IMR-90 (cell line): ENCODE measurements at regions of chr20 and their contacts with region 1.

Region 1: DNA sequence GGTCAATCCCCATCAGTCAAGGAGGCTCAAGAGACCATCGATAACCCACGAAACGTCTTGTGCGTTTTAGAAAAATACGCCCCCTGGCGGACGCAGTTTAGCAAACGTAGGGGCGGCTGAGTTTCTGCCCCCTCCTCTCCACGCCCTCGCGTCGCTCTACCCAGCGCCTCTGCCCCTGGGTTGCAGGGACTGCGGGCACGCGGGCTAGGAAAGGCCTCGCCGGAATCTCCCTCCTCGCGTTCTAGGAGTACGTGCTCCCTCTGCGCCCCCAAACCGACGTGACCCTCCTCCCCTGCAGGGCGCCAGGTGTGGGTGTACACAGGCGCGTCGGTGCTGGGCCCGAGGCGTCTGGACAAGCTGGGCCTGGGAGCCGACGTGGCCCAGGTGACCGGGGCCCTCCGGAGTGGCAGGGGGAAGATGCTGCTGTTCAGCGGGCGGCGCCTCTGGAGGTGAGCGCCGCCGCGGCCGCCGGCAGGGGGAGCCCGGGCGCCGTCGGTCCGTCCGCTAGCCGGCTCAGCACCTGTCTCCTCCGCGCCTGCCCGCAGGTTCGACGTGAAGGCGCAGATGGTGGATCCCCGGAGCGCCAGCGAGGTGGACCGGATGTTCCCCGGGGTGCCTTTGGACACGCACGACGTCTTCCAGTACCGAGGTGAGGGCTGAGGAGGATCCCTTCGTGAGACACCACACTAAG is 5.3 kb downstream of the MMP9 start:
- DNase-seq: peak; percentile 32
- ATAC-seq: peak; percentile 89
- H3K4me3 ChIP-seq: no peak overlapping the region
- H3K27ac ChIP-seq: no peak overlapping the region
- H3K4me1 ChIP-seq: no peaks in the 10 kb centered on the region
- H3K27me3 ChIP-seq: peaks cover 69% of the 10 kb centered on the region
- CTCF ChIP-seq: peak; percentile 67
- POLR2A ChIP-seq: no peak
- RAD21 ChIP-seq: peak; percentile 60

Region 2: DNA sequence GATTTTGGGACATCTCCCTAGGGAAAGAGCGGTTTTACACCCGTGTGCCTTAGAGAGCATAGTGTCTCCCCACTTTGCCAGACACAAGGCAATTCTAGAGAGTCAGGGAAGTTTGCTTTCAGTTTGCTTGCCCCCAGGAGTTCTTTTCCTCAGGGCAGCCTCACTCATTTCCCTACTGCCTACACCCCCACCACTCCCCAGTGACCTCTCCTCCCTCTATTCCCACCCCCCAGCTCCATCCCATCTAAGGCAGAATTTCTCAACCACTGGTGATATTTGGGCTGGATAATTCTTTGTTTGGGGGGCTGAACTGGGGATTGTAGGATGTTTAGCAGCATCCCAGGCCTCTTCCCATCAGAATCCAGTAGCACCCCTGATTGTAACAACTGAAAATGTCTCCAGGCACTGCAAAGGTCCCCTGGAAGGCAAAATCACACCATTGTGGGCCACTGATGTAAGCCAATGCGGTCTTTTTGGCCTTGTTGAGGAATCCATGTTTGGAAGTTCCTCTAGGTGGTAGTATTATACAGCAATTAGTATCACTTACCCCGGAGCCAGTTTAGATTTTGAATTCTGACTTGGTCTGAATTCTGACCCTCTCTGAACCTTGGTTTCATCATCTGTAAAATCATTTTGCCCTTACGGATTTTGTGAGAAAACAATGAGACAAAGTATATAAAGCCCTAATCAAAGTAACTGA is 468.1 kb before region 1 on chr20:
- CTCF ChIA-PET with region 1: no interaction called
- POLR2A ChIA-PET with region 1: no interaction called
- dilution Hi-C with region 1: no loop called
- in situ Hi-C with region 1: no loop called
- intact Hi-C with region 1: loop called (anchors 10 kb)
- DNase-seq: peak; percentile 37
- ATAC-seq: peak; percentile 69
- H3K4me3 ChIP-seq: no peak overlapping the region
- H3K27ac ChIP-seq: no peak overlapping the region
- H3K4me1 ChIP-seq: no peaks in the 10 kb centered on the region
- H3K27me3 ChIP-seq: peaks cover 5% of the 10 kb centered on the region
- CTCF ChIP-seq: peak; percentile 56
- POLR2A ChIP-seq: no peak
- RAD21 ChIP-seq: peak; percentile 65

Region 3: DNA sequence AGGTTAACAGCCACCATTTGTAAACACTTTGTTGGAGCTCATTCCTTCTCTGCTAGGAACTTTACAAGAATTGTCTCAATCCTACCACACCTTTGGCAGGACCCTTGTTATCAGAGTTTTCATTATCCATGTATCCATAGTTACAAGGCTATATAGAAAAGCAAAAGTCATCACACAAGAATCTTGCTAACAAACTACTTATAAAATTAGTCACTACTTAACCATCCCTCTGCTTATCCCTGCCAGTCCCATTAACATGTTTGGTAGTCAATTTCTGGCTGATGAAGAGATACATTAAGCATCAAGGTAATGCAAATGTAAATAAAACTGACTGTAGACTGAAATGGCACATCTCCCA is 146.2 kb before region 1 on chr20:
- CTCF ChIA-PET with region 1: no interaction called
- POLR2A ChIA-PET with region 1: no interaction called
- dilution Hi-C with region 1: no loop called
- in situ Hi-C with region 1: no loop called
- intact Hi-C with region 1: no loop called
- DNase-seq: peak; percentile 81
- ATAC-seq: peak; percentile 87
- H3K4me3 ChIP-seq: no peak overlapping the region
- H3K27ac ChIP-seq: peak overlapping the region; percentile 83; the same call in 1 of the 2 replicates
- H3K4me1 ChIP-seq: peaks cover 5% of the 10 kb centered on the region; the same call in 1 of the 2 replicates
- H3K27me3 ChIP-seq: no peaks in the 10 kb centered on the region
- CTCF ChIP-seq: no peak
- POLR2A ChIP-seq: no peak; the same call in 1 of the 2 replicates
- RAD21 ChIP-seq: no peak

Region 4: DNA sequence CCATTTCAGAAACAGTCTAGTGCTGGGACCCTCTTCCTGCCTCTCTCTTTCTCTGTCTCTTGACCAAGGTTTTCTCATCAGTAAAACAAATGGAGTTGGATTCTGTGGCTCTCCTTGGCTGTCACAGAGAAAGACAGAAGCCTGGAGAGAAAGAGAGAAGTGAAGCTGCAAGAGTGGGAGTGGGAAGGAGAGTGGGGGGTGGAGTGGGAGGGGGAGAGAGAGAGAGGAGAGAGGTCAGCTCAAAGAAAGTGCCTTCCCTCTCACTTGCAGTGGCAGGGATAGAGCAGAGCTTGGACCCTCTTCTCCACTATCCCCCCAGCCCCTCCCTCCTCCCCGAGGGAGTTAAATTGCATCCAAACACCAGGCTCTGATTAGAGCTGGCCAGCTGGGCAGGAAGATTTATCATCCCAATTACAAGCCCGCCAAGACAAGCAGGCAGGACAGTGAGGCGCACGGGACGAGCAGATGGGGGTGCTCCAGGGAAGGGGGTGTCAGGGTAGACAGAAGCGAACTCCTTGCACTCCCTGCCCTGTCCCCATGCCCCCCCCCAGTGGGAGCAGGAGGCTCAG is 178.5 kb after region 1 on chr20:
- CTCF ChIA-PET with region 1: no interaction called
- POLR2A ChIA-PET with region 1: no interaction called
- dilution Hi-C with region 1: no loop called
- in situ Hi-C with region 1: no loop called
- intact Hi-C with region 1: no loop called
- DNase-seq: no peak
- ATAC-seq: no peak
- H3K4me3 ChIP-seq: no peak overlapping the region
- H3K27ac ChIP-seq: no peak overlapping the region
- H3K4me1 ChIP-seq: no peaks in the 10 kb centered on the region
- H3K27me3 ChIP-seq: peaks cover 15% of the 10 kb centered on the region
- CTCF ChIP-seq: no peak
- POLR2A ChIP-seq: no peak
- RAD21 ChIP-seq: no peak

Region 5: DNA sequence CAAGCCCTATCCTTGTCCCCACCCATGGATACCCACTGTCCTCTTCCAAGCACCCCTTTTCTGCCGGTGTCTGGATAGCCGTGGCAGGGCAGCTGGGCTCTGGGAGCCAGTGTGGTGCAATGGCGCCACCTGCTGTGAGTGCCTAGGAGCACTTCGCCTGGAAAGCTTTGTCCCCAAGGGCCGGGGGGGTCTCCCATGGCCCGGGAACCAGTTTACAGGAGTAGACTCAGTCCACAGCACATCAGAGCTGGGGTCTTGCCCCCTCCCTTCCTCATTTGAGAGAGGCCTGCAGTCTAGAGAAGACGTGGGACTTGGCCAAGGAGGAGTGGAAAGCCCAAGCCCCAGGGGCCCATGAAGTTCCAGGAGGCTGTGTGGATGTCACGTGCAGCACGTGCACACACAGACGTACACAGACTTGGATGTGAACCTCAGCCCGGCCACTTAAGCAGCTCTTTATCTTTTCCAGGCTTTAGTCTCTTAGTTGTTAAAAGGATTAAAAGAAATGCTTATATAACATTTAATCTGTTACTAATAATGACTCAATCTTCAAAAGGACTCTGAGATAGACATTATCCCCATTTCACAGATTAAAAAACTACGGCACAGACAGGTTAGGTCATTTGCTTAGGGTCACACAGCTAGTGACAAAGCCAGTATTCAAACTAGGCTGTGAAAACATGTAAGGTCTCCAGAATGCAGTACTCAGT is 335.2 kb after region 1 on chr20:
- CTCF ChIA-PET with region 1: no interaction called
- POLR2A ChIA-PET with region 1: no interaction called
- dilution Hi-C with region 1: no loop called
- in situ Hi-C with region 1: no loop called
- intact Hi-C with region 1: loop called (anchors 2 kb)
- DNase-seq: peak; percentile 31
- ATAC-seq: peak; percentile 42; the same call in 1 of the 2 replicates
- H3K4me3 ChIP-seq: no peak overlapping the region
- H3K27ac ChIP-seq: no peak overlapping the region
- H3K4me1 ChIP-seq: peaks cover 12% of the 10 kb centered on the region
- H3K27me3 ChIP-seq: no peaks in the 10 kb centered on the region; the same call in 1 of the 2 replicates
- CTCF ChIP-seq: peak; percentile 73
- POLR2A ChIP-seq: no peak
- RAD21 ChIP-seq: peak; percentile 77